ENCODE measurements at regions of chr7 and their contacts with region 1.

Region 1: DNA sequence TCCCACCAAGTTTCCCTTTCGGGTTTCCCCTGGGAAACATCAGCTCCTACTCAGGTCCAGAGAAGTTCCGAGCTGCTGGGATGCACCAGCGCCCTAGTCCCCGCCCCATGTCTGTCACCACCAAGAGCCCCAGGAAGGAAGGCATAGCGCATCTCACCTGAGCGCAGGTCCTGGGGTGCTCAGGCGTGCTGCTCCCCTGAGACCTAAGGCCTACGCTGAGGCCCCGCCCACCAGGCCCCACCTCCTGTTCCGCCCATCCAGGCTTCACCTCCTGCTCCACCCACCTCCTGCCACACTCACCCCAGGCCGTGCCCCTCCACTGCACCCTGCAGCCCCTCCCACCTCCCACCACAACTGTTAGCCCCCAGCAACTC is 1.2 kb upstream of the TFR2 start:
- DNase-seq: peak; percentile 38
- ATAC-seq: peak; percentile 83
- H3K4me3 ChIP-seq: peak overlapping the region; percentile 57 to 84 (median 64)
- H3K27ac ChIP-seq: peak overlapping the region; percentile 88
- H3K4me1 ChIP-seq: peaks cover 41% of the 10 kb centered on the region
- H3K27me3 ChIP-seq: peaks cover 5 to 17% of the 10 kb centered on the region in 2 experiments; a peak in 4 of 5 replicates
- CTCF ChIP-seq: no peak
- EP300 ChIP-seq: no peak
- POLR2A ChIP-seq: peak; percentile 23 to 93; a peak in 2 of 4 replicates
- RAD21 ChIP-seq: no peak

Region 2: GRCh38 chr7:100611974-100612729 is 30.4 kb before region 1 on chr7 and contains the start of gene MOSPD3:
- CTCF ChIA-PET with region 1: no interaction called
- POLR2A ChIA-PET with region 1: interaction called, 17 read pairs
- in situ Hi-C with region 1: no loop called
- intact Hi-C with region 1: no loop called
- DNase-seq: peak; percentile 99
- ATAC-seq: peak; percentile 94
- H3K4me3 ChIP-seq: peak within 1 kb of the TSS; percentile 61 to 81 (median 77)
- H3K27ac ChIP-seq: peak within 1 kb of the TSS; percentile 95
- H3K4me1 ChIP-seq: peaks cover 29% of the 10 kb centered on the region
- H3K27me3 ChIP-seq: no peaks in the 10 kb centered on the region
- CTCF ChIP-seq: no peak
- EP300 ChIP-seq: no peak
- POLR2A ChIP-seq: peak; percentile 60 to 78
- RAD21 ChIP-seq: no peak
- total RNA-seq, gene MOSPD3: 6.1 and 7.6 TPM in 2 replicates

Region 3: DNA sequence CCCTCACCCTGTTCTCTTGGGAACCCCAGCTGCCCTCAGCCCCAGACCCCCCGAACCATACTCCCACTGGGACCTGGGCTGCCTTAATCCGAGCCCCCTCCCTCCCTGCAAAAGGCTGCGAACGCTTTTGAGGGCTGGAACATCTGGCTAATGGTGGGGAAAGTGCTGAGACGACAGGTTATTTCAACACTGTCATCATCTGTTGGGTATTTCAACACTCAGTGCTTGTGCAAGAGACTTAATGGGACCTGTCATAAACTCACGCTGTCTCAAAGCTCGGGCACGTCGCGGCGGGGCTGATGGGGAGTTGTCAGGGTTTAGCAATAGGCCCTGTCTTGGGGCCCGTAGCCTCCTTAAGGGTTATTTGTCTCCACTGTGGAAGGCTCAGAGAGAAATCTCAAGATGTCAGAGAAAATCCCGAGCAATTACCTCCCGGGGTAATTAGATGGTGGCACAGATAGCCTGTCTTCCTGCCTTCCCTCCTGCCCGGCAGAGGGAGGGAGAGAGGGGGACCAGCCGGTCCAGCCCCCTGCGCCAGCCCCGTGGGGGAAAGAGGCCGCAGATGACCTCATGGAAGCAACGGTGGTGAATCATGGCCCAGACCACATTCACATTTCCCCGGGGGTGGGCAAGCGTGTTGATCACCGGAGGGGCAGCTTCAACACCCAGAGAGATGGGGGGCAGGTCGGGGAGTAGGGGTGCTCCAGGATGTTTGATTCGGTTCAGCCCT is 1075.3 kb after region 1 on chr7:
- CTCF ChIA-PET with region 1: no interaction called
- POLR2A ChIA-PET with region 1: no interaction called
- in situ Hi-C with region 1: no loop called
- intact Hi-C with region 1: no loop called
- DNase-seq: peak; percentile 69
- ATAC-seq: peak; percentile 70
- H3K4me3 ChIP-seq: peak overlapping the region; percentile 16 to 59 (median 34); a peak in 5 of 6 replicates
- H3K27ac ChIP-seq: no peak overlapping the region
- H3K4me1 ChIP-seq: peaks cover 25% of the 10 kb centered on the region
- H3K27me3 ChIP-seq: peaks cover 0 to 9% of the 10 kb centered on the region in 2 experiments; a peak in 2 of 5 replicates
- CTCF ChIP-seq: no peak
- EP300 ChIP-seq: no peak
- POLR2A ChIP-seq: no peak
- RAD21 ChIP-seq: no peak